Calu3 (cell line): ENCODE measurements at regions of chr3 and their contacts with region 1.

Region 1: GRCh38 chr3:159988617-159989271 is at the start of gene IL12A:
- DNase-seq: peak; percentile 94
- H3K4me3 Mint-ChIP-seq: peak within 1 kb of the TSS; percentile 94
- H3K27ac Mint-ChIP-seq: peak within 1 kb of the TSS; percentile 31
- H3K4me1 Mint-ChIP-seq: peaks cover 8% of the 10 kb centered on the region
- H3K27me3 Mint-ChIP-seq: no peaks in the 10 kb centered on the region
- CTCF ChIP-seq: peak; percentile 100
- total RNA-seq, gene IL12A: 1.0 and 3.6 TPM in 2 replicates

Region 2: GRCh38 chr3:159260049-159260662 is 728.6 kb before region 1 on chr3:
- CTCF ChIA-PET with region 1: no interaction called
- intact Hi-C with region 1: no loop called
- DNase-seq: peak; percentile 78
- H3K4me3 Mint-ChIP-seq: no peak overlapping the region
- H3K27ac Mint-ChIP-seq: no peak overlapping the region
- H3K4me1 Mint-ChIP-seq: no peaks in the 10 kb centered on the region
- H3K27me3 Mint-ChIP-seq: peaks cover 15% of the 10 kb centered on the region
- CTCF ChIP-seq: peak; percentile 78

Region 3: DNA sequence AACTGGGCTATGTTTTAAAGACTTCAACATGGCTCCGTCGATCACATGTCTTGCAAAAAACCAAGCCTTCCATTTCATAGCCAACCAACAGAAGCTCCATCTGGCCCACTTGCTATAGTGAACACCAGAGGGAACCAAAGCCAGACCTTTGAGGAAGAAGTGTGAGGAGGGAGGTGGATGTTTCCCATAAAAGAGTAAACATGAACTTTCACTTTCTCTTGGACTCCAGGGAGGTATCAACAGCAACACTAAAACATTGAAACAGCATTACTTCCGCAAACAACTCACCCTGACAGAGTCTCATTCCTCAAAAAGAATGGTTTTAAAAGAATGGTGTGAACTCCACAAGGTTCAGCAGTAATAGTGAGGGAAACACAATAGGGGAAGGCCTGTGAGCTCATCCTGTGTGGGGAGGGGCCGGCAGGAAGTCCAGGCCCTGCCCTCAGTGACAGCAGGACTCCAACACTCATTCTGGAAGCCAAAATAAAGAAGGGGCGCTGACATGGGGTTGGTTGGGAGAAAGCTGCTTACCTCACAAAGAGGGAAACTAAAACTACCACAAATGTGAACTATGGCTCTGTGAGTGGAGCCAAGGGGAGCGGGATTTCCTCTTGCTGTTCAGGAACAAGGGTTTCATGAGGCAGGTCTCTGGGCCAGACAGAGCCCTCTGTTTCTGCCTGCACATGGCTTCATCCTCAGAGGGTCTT is 59.2 kb before region 1 on chr3:
- CTCF ChIA-PET with region 1: interaction called, 14 read pairs
- intact Hi-C with region 1: no loop called
- DNase-seq: peak; percentile 49
- H3K4me3 Mint-ChIP-seq: no peak overlapping the region
- H3K27ac Mint-ChIP-seq: no peak overlapping the region
- H3K4me1 Mint-ChIP-seq: peaks cover 9% of the 10 kb centered on the region
- H3K27me3 Mint-ChIP-seq: no peaks in the 10 kb centered on the region
- CTCF ChIP-seq: no peak

Region 4: DNA sequence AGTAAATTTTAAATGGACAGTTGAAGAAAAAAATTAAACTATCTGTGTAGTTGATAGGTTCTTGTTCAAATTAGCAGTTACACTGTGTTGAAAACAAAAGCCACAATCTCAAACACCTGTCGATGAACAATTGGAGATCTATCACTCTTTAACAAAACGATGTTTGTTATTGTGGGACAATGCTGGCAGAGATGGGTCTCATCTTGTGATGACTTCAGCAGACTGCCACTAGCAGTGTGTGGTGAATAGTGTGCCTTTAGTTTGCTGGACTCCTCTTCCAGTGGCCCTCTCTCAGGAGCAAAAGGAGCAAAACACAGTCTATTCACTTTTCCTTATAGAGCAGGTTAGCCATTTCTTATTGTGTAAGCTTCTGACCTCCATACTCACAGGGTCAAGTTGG is 475.6 kb after region 1 on chr3:
- CTCF ChIA-PET with region 1: no interaction called
- intact Hi-C with region 1: no loop called
- DNase-seq: no peak
- H3K4me3 Mint-ChIP-seq: no peak overlapping the region
- H3K27ac Mint-ChIP-seq: no peak overlapping the region
- H3K4me1 Mint-ChIP-seq: no peaks in the 10 kb centered on the region
- H3K27me3 Mint-ChIP-seq: peaks cover 29% of the 10 kb centered on the region
- CTCF ChIP-seq: no peak